H1 (cell line): ENCODE measurements at regions of chr12 and their contacts with region 1.

Region 1: GRCh38 chr12:76878899-76879709 is at the start of gene CSRP2:
- DNase-seq: peak; percentile 90 to 95
- H3K4me3 ChIP-seq: peak within 1 kb of the TSS; percentile 73 to 89 (median 84)
- H3K27ac ChIP-seq: peak within 1 kb of the TSS; percentile 85
- H3K4me1 ChIP-seq: peaks cover 3 to 22% (median 14%) of the 10 kb centered on the region in 4 experiments; a peak in 6 of 7 replicates
- H3K27me3 ChIP-seq: no peaks in the 10 kb centered on the region
- CTCF ChIP-seq: peak in 2 of 3 experiments; percentile 13 to 16; a peak in 3 of 4 replicates
- EP300 ChIP-seq: no peak
- POLR2A ChIP-seq: peak; percentile 96 to 97
- RAD21 ChIP-seq: no peak; a peak in 1 of 4 replicates
- total RNA-seq, gene CSRP2: 227 and 228 TPM in 2 replicates

Region 2: GRCh38 chr12:76866726-76867125 is 12.4 kb before region 1 on chr12:
- CTCF ChIA-PET with region 1: interaction called, 8 read pairs
- POLR2A ChIA-PET with region 1: interaction called, 19 read pairs
- DNase-seq: no peak
- H3K4me3 ChIP-seq: no peak overlapping the region
- H3K27ac ChIP-seq: no peak overlapping the region
- H3K4me1 ChIP-seq: peaks cover 0 to 7% (median 3%) of the 10 kb centered on the region in 4 experiments; a peak in 4 of 7 replicates
- H3K27me3 ChIP-seq: no peaks in the 10 kb centered on the region
- CTCF ChIP-seq: no peak
- EP300 ChIP-seq: no peak
- POLR2A ChIP-seq: no peak
- RAD21 ChIP-seq: no peak

Region 3: DNA sequence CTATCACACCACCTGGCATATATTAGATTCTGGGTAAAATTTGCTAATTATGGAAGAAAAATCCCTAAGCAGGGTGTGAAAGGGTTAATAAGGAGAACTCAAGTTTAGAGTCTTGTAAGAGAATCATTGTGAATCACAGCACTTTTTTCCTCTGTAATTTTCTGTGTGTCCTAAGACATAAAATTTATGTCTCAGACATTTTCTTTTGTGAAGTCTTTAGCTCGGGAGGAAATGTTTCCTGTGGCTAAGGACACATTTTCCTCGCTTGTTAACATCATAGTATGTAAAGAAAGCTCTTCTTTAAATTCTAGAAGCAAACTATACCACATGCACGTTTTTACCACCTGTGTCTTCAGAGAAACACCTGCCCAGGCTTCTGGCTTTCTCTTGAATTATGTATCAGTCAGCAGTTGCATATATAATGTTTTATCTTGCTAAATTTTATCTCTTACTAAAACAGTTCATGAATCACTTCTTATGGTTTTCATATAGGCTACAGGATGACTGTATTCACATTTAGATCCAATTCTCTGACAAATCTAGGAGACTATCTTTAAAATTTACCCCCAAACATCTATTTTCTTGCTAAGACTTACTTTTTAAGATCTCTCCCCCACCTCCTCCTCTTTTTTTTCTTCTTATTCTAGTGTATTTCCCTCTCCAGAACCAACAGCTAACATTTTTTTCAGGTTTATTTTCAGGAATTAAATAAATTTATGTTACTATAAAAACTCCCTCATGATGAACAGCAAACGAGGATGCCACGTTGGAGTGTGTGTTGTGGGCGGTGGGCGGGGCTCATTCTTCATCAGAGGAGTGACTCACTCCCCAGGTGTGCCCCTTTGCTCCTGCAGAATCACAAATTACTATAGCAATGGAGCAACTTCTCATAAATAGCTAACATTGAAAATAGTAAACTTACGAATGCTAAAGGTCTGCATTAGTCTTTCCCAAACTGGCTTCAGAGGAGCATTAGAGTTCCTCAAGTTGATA is 11.3 kb after region 1 on chr12:
- CTCF ChIA-PET with region 1: interaction called, 9 read pairs
- POLR2A ChIA-PET with region 1: interaction called, 17 read pairs
- DNase-seq: no peak
- H3K4me3 ChIP-seq: no peak overlapping the region
- H3K27ac ChIP-seq: no peak overlapping the region
- H3K4me1 ChIP-seq: peaks cover 0 to 4% (median under 1%) of the 10 kb centered on the region in 4 experiments; a peak in 1 of 7 replicates
- H3K27me3 ChIP-seq: no peaks in the 10 kb centered on the region
- CTCF ChIP-seq: no peak
- EP300 ChIP-seq: no peak
- POLR2A ChIP-seq: no peak
- RAD21 ChIP-seq: no peak

Region 4: GRCh38 chr12:76909290-76909689 is 30.2 kb after region 1 on chr12:
- CTCF ChIA-PET with region 1: interaction called, 3 read pairs
- POLR2A ChIA-PET with region 1: interaction called, 16 read pairs
- DNase-seq: no peak
- H3K4me3 ChIP-seq: no peak overlapping the region
- H3K27ac ChIP-seq: no peak overlapping the region
- H3K4me1 ChIP-seq: peaks cover 0 to 18% (median 6%) of the 10 kb centered on the region in 4 experiments; a peak in 5 of 7 replicates
- H3K27me3 ChIP-seq: no peaks in the 10 kb centered on the region
- CTCF ChIP-seq: no peak
- EP300 ChIP-seq: no peak
- POLR2A ChIP-seq: no peak
- RAD21 ChIP-seq: no peak